Activated naive CD8-positive, alpha-beta T cell treated with anti-CD3 and anti-CD28 coated beads, Interleukin-2, amount 10 ng/mL, durations not matched to agents 7 days and 5 days (primary cell): ENCODE measurements at regions of chr19 and their contacts with region 1.

Region 1: GRCh38 chr19:57914531-57914930 is 1.9 kb downstream of the ZNF417 start:
- DNase-seq: no peak
- ATAC-seq: no peak
- H3K4me3 Mint-ChIP-seq: peak overlapping the region; percentile 18
- H3K27ac Mint-ChIP-seq: no peak overlapping the region
- H3K4me1 Mint-ChIP-seq: peaks cover 20% of the 10 kb centered on the region
- H3K27me3 Mint-ChIP-seq: no peaks in the 10 kb centered on the region

Region 2: DNA sequence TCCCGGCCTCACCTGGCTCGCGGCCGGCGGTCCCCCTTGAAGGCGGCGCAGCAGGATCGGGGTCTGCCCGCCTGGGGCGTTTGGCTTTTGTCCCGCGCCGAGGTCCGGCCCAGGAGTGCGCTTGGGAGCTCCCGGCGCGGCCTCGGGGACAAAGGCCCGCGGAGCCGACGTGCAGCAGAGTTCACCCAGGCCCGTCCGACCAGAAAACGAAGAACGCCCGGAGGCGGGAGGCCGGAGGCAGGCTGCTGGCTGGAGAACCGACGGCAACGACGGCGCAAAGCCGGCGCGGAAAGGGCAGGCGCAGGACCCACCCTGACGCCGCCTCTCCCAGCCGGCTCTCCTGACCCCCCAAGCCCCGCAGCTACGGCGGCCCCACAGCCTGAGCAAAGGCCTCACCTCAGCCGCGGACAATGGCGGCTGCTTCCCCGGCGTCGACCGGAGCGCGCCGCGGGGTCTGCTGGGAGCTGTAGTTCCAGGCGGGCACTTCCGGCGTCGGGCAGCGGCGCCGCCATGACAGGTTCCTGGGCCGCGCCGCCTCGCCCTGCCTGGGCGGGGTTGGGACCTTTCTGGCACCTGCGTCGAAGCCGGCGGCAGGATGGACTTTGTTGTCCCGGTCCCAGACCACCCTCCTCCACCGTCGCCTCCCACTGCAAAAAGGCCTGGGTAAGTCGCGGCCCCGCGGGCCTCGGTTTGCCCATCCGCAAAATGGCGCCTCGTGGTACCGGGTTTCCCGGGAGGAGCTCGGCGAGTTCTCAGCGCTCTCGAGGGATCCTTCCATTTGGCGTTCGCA is 88.0 kb after region 1 on chr19 and contains the start of gene ZNF606:
- POLR2A ChIA-PET with region 1: interaction called, 11 read pairs
- DNase-seq: peak; percentile 91
- ATAC-seq: peak; percentile 95
- H3K4me3 Mint-ChIP-seq: peak within 1 kb of the TSS; percentile 83
- H3K27ac Mint-ChIP-seq: peak within 1 kb of the TSS; percentile 84
- H3K4me1 Mint-ChIP-seq: peaks cover 21% of the 10 kb centered on the region
- H3K27me3 Mint-ChIP-seq: no peaks in the 10 kb centered on the region
- total RNA-seq, gene ZNF606: 21.3 to 22.2 TPM